CD4-positive, alpha-beta memory T cell (primary cell): ENCODE measurements at regions of chr5 and their contacts with region 1.

Region 1: DNA sequence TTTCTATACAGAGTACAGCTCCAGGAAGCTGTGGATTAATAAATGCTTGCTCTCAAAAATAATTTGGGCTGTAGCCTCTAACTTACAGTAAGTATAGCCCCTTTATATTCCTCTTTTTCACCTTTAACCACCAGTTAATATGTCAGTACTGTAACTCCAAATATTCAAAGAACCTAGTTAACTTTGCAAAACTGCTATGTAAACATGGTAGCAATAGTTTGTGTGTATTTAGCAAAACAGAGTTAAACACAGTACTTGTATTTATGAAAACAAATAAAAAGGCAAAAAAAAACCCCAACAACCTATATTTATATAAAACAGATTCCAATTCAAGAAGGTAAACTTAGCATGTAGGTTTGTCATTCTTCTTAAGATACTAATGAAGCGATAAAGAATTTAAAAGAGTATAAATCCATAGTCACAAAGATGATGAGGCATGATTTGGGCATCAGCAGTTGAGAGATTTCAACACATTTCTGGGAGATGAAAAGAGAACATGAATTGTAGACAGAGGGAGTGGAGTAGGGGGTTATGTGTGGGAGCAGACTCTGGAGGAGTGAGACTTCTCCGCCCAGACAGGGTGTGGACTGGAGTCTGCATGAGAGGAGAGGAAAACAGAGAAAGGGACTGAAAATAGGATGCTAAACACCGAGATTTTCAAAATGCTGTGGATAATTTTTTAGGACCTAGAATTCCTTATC is 47.0 kb upstream of the F2RL1 start:
- DNase-seq: no peak
- H3K4me3 ChIP-seq: no peak overlapping the region
- H3K4me3 Mint-ChIP-seq: no peak overlapping the region
- H3K27ac ChIP-seq: no peak overlapping the region
- H3K27ac Mint-ChIP-seq: peak overlapping the region in 2 of 7 donors; percentile 43 to 52
- H3K4me1 ChIP-seq: peaks cover 3% of the 10 kb centered on the region
- H3K4me1 Mint-ChIP-seq: peaks cover 0 to 6% (median 4%) of the 10 kb centered on the region in 4 donors
- H3K27me3 ChIP-seq: no peaks in the 10 kb centered on the region
- H3K27me3 Mint-ChIP-seq: no peaks in the 10 kb centered on the region

Region 2: GRCh38 chr5:76601470-76601869 is 170.4 kb before region 1 on chr5:
- CTCF ChIA-PET with region 1: interaction called, 148 read pairs
- POLR2A ChIA-PET with region 1: interaction called, 8 read pairs
- intact Hi-C with region 1: loop called (anchors 1 kb)
- DNase-seq: peak in 4 of 5 donors; percentile 42 to 58 (median 46)
- H3K4me3 ChIP-seq: no peak overlapping the region
- H3K4me3 Mint-ChIP-seq: no peak overlapping the region
- H3K27ac ChIP-seq: no peak overlapping the region
- H3K27ac Mint-ChIP-seq: peak overlapping the region in 5 of 7 donors; percentile 23 to 59 (median 31)
- H3K4me1 ChIP-seq: no peaks in the 10 kb centered on the region
- H3K4me1 Mint-ChIP-seq: peaks cover 0 to 17% (median 5%) of the 10 kb centered on the region in 4 donors
- H3K27me3 ChIP-seq: no peaks in the 10 kb centered on the region
- H3K27me3 Mint-ChIP-seq: no peaks in the 10 kb centered on the region

Region 3: DNA sequence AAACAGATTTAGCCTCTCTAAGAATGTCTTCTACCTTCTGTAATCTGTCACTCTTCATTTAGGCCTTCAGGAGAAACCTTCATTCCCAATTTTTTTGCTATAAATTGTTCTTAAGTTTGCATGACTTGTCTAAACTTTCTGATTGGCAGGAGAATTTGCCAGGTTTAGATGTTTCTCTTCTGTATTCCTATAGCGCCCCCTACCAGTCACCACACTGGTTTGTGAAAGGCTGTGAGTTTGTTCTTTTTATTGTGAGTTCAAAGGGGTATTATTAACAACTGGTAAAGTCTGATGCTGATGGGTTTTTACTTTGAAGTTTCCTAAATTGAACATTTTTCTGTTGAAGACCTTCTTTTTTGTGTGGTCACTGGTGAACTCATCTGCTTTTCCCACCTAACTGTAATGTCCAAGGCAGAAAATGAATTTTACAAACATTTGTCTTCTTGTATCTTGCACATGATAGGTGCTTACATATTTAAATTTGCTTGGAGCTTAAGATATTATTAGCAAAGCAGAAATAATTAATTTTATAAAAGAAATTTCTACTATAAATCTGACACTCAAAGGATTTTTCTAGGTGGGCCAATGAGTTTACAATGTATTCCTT is 130.2 kb before region 1 on chr5:
- CTCF ChIA-PET with region 1: interaction called, 14 read pairs
- POLR2A ChIA-PET with region 1: no interaction called
- intact Hi-C with region 1: no loop called
- DNase-seq: peak; percentile 47 to 60 (median 56)
- H3K4me3 ChIP-seq: no peak overlapping the region
- H3K4me3 Mint-ChIP-seq: no peak overlapping the region
- H3K27ac ChIP-seq: no peak overlapping the region
- H3K27ac Mint-ChIP-seq: peak overlapping the region in 3 of 7 donors; percentile 9 to 61 (median 34)
- H3K4me1 ChIP-seq: no peaks in the 10 kb centered on the region
- H3K4me1 Mint-ChIP-seq: peaks cover 0 to 3% (median 1%) of the 10 kb centered on the region in 4 donors
- H3K27me3 ChIP-seq: no peaks in the 10 kb centered on the region
- H3K27me3 Mint-ChIP-seq: no peaks in the 10 kb centered on the region

Region 4: GRCh38 chr5:76705574-76705973 is 66.3 kb before region 1 on chr5:
- CTCF ChIA-PET with region 1: interaction called, 35 read pairs
- POLR2A ChIA-PET with region 1: no interaction called
- intact Hi-C with region 1: no loop called
- DNase-seq: no peak
- H3K4me3 ChIP-seq: no peak overlapping the region
- H3K4me3 Mint-ChIP-seq: no peak overlapping the region
- H3K27ac ChIP-seq: no peak overlapping the region
- H3K27ac Mint-ChIP-seq: no peak overlapping the region
- H3K4me1 ChIP-seq: no peaks in the 10 kb centered on the region
- H3K4me1 Mint-ChIP-seq: peaks cover 0 to 3% (median 1%) of the 10 kb centered on the region in 4 donors
- H3K27me3 ChIP-seq: no peaks in the 10 kb centered on the region
- H3K27me3 Mint-ChIP-seq: no peaks in the 10 kb centered on the region

Region 5: DNA sequence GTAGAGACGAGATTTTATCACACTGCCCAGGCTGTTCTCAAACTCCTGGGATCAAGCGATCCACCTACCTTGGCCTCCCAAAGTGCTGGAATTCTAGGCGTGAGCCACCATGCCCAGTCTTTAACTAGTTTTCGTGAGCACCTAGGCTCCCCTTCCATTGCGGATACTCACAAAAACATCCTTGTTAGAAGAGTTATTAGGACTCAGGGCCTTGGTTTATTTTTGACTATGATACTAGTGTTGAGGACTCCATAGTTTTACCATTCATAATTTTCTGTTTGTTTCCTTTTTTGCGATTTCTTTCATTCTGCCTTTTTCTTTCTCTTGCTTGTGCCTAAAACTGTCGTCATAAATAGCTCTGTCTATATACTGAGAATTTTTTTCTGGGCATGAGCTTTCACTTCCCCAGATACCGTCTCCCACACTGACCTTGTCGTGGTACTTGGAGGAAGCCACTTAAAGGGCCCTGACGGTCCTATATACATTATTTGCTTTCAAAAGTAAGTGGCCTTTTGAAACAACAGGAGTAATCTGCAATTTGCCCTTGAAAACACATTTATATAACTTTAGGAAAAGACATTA is 50.8 kb before region 1 on chr5:
- CTCF ChIA-PET with region 1: interaction called, 95 read pairs
- POLR2A ChIA-PET with region 1: interaction called, 11 read pairs
- intact Hi-C with region 1: loop called (anchors 1 kb)
- DNase-seq: no peak
- H3K4me3 ChIP-seq: no peak overlapping the region
- H3K4me3 Mint-ChIP-seq: peak overlapping the region in 3 of 8 donors; percentile 4 to 25 (median 13)
- H3K27ac ChIP-seq: no peak overlapping the region
- H3K27ac Mint-ChIP-seq: peak overlapping the region in 3 of 7 donors; percentile 17 to 73 (median 34)
- H3K4me1 ChIP-seq: peaks cover 15% of the 10 kb centered on the region
- H3K4me1 Mint-ChIP-seq: peaks cover 9 to 25% (median 19%) of the 10 kb centered on the region in 4 donors
- H3K27me3 ChIP-seq: no peaks in the 10 kb centered on the region
- H3K27me3 Mint-ChIP-seq: peaks cover 0 to 4% of the 10 kb centered on the region in 2 donors

Region 6: GRCh38 chr5:76742583-76742982 is 29.3 kb before region 1 on chr5:
- CTCF ChIA-PET with region 1: interaction called, 83 read pairs
- POLR2A ChIA-PET with region 1: interaction called, 28 read pairs
- intact Hi-C with region 1: loop called (anchors 1 kb)
- DNase-seq: no peak
- H3K4me3 ChIP-seq: no peak overlapping the region
- H3K4me3 Mint-ChIP-seq: no peak overlapping the region
- H3K27ac ChIP-seq: no peak overlapping the region
- H3K27ac Mint-ChIP-seq: no peak overlapping the region
- H3K4me1 ChIP-seq: peaks cover 22% of the 10 kb centered on the region
- H3K4me1 Mint-ChIP-seq: peaks cover 11 to 32% (median 20%) of the 10 kb centered on the region in 4 donors
- H3K27me3 ChIP-seq: no peaks in the 10 kb centered on the region
- H3K27me3 Mint-ChIP-seq: no peaks in the 10 kb centered on the region

Region 7: DNA sequence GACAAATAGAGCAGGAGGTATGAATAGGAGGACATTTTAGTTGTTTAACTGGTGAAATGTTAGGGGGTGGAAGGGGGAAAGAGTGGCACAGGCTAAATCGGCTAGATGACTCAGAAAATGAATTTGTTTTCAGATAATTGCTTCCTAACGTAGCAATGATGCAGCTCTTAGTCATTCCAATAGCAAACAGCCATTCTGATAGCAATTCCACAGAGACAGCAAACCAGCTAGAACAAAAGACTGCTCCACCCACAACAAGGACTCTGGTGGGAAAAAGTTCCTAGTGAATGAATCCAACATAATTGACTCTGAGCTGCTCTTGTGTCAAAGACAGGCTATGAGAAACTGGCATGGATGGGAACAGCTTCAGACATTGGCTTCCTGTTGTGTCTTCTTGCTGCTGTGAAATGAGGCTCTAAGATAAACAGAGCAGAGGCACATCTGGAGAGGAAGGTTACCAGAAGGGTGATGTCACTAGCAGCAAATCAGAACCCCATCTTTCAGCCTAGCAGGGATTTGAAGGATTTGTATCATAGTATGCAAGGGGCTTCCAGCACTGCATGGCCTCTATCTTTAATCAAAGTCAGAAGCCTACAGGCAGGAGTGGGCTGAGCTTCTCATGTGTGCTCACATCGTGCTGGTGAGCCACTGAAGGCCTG is 18.9 kb after region 1 on chr5:
- CTCF ChIA-PET with region 1: interaction called, 18 read pairs
- POLR2A ChIA-PET with region 1: interaction called, 3 read pairs
- intact Hi-C with region 1: no loop called
- DNase-seq: peak in 4 of 5 donors; percentile 6 to 43 (median 12)
- H3K4me3 ChIP-seq: no peak overlapping the region
- H3K4me3 Mint-ChIP-seq: peak overlapping the region in 1 of 8 donors; percentile 13
- H3K27ac ChIP-seq: no peak overlapping the region
- H3K27ac Mint-ChIP-seq: peak overlapping the region; percentile 9 to 80 (median 63)
- H3K4me1 ChIP-seq: peaks cover 17% of the 10 kb centered on the region
- H3K4me1 Mint-ChIP-seq: peaks cover 14 to 23% (median 19%) of the 10 kb centered on the region in 4 donors
- H3K27me3 ChIP-seq: no peaks in the 10 kb centered on the region
- H3K27me3 Mint-ChIP-seq: no peaks in the 10 kb centered on the region